Body of pancreas (tissue), 4 donors: ENCODE measurements at regions of chr16 and their contacts with region 1.

Region 1: DNA sequence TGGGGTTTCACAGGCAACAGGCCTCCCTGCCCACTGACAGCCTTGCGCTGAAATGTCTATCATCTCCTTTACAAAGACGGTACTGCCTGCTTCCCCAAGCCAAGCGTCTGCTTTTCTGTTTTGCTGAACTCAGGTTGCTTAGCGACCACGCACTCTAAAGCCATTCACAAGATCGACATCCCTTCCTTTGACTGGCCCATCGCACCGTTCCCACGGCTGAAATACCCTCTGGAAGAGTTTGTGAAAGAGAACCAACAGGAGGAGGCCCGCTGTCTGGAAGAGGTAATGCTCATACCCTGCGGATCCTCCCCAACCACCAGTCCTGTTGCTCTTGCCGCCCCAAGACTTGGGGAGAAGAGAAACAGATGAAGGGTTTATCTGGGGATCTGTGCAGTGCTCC is 28.7 kb downstream of the TMEM186 start:
- DNase-seq: no peak
- ATAC-seq: no peak
- H3K4me3 ChIP-seq: no peak overlapping the region
- H3K27ac ChIP-seq: no peak overlapping the region
- H3K4me1 ChIP-seq: peaks cover 6% of the 10 kb centered on the region
- H3K27me3 ChIP-seq: no peaks in the 10 kb centered on the region
- CTCF ChIP-seq: no peak
- POLR2A ChIP-seq: no peak

Region 2: GRCh38 chr16:8818504-8819270 is 50.0 kb after region 1 on chr16:
- intact Hi-C with region 1: loop called (anchors 5 kb)
- DNase-seq: no peak
- ATAC-seq: no peak
- H3K4me3 ChIP-seq: no peak overlapping the region
- H3K27ac ChIP-seq: no peak overlapping the region
- H3K4me1 ChIP-seq: peaks cover 9% of the 10 kb centered on the region
- H3K27me3 ChIP-seq: no peaks in the 10 kb centered on the region
- CTCF ChIP-seq: no peak
- POLR2A ChIP-seq: no peak

Region 3: DNA sequence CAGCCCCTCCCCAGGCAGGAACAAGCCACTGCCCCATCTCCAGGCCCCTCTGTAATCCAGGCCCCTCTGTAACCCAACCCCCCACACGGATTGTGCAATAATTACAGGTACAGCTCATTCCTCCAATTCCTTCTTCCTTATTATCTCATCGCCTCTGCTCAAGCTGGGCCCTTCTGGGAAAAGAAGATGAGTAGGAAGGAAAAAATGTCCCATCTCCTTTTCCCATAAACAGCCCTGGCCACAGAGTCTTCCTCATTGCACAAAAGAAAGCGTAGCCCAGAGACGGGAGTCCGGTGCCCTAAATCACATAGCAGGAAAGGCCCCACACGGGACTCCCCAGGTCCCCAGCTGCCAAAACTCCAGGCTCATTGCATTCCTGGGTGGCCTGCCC is 109.8 kb after region 1 on chr16:
- intact Hi-C with region 1: no loop called
- DNase-seq: peak in 1 of 4 donors; percentile 40
- ATAC-seq: peak; percentile 34
- H3K4me3 ChIP-seq: no peak overlapping the region
- H3K27ac ChIP-seq: peak overlapping the region in 2 of 4 donors; percentile 56 to 70
- H3K4me1 ChIP-seq: peaks cover 15% of the 10 kb centered on the region
- H3K27me3 ChIP-seq: no peaks in the 10 kb centered on the region
- CTCF ChIP-seq: no peak
- POLR2A ChIP-seq: no peak